ENCODE measurements at regions of chr19 and their contacts with region 1.

Region 1: GRCh38 chr19:46990991-46991676 is 28.5 kb upstream of the NPAS1 start:
- DNase-seq: peak; percentile 74 to 81
- ATAC-seq: peak; percentile 88
- H3K4me3 ChIP-seq: no peak overlapping the region
- H3K27ac ChIP-seq: peak overlapping the region; percentile 69 to 71 (median 70)
- H3K4me1 ChIP-seq: peaks cover 19 to 22% of the 10 kb centered on the region in 2 donors
- H3K27me3 ChIP-seq: no peaks in the 10 kb centered on the region
- CTCF ChIP-seq: peak; percentile 70 to 87 (median 84)
- POLR2A ChIP-seq: no peak

Region 2: GRCh38 chr19:45542234-45542668 is 1448.9 kb before region 1 on chr19:
- in situ Hi-C with region 1: no loop called
- intact Hi-C with region 1: no loop called
- DNase-seq: no peak
- ATAC-seq: no peak
- H3K4me3 ChIP-seq: no peak overlapping the region
- H3K27ac ChIP-seq: no peak overlapping the region
- H3K4me1 ChIP-seq: no peaks in the 10 kb centered on the region
- H3K27me3 ChIP-seq: no peaks in the 10 kb centered on the region
- CTCF ChIP-seq: no peak
- POLR2A ChIP-seq: no peak

Region 3: DNA sequence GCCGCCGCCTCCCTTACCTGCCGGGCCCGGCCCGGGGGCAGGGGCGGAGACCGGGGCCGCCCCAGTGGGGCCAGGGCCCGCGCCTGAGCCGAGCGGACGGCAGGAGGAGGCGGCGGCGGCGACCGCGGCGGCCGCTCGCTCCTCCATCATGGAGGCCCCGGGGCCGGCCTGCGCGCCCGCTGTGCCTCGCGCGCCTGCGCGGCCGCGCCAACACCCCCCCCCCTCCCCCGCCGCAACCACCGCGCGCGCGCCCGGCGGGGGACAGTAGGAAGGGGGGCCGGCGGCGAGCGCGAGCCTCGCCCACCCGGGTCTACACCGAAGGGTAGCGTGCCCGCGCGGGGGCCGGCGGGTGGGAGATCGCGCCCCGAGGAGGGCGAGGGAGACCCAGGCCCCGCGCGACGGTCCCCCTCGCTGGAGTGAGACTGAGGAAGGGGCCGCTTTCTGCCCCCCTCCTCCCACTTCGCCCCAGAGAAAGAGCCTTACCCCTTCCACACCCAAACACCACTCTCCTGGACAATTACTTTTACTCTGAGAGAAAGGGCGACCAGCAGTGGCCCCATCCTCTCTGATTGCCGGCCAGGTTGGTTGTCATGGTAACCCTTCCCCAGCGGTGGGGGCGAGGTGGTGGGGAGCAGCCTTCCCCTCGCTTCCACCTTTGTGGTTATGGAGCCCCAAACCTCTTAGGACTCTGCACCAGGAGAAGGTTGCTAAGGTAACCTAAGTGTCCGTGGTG is 244.7 kb before region 1 on chr19 and contains the start of gene STRN4:
- in situ Hi-C with region 1: loop called in 2 of 4 experiments (anchors 25 kb)
- intact Hi-C with region 1: loop called (anchors 5 kb)
- DNase-seq: no peak
- ATAC-seq: peak; percentile 74 to 78
- H3K4me3 ChIP-seq: peak within 1 kb of the TSS; percentile 87 to 100 (median 92)
- H3K27ac ChIP-seq: peak within 1 kb of the TSS; percentile 90 to 98 (median 96)
- H3K4me1 ChIP-seq: peaks cover 25 to 51% of the 10 kb centered on the region in 2 donors
- H3K27me3 ChIP-seq: no peaks in the 10 kb centered on the region
- CTCF ChIP-seq: no peak
- POLR2A ChIP-seq: peak; percentile 82 to 93
- total RNA-seq, gene STRN4: 45.5 to 75.7 (median 57.9) TPM

Region 4: DNA sequence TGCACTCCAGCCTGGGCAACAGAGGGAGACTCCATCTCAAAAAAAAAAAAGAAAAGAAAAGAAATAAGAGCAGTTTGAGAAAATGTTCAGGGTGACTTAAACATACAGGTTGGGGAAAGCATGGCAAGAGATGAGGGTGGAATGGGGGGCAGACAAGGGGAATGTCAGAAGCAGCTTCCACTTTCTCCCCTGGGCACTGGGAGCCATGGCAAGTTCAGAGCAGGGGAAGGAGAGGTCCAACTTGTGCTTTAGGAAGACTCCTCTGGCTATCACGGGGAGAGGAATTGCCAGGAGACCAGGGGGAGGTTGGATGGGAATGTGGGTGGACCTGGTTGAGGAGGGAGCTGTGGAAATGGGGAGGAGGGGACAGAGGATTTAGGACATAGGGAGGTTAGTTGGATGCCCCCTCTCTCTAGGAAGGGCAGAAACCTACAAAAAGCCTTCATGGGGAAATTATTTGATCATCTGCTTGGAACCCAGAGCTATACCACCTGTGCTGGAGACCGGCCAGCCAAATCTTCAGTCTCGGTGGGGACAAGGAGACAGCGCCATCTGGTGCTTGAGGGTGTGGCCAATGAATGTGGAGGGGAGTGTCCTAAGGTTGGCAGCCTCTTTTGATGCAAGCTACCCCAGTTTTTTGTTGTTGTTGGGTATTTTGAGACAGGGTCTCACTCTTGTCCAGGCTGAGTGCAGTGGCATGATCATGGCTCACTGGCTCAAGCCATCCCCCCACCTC is 237.5 kb before region 1 on chr19:
- in situ Hi-C with region 1: loop called in 2 of 4 experiments (anchors 25 kb)
- intact Hi-C with region 1: loop called (anchors 5 kb)
- DNase-seq: no peak
- ATAC-seq: no peak
- H3K4me3 ChIP-seq: no peak overlapping the region
- H3K27ac ChIP-seq: no peak overlapping the region
- H3K4me1 ChIP-seq: peaks cover 0 to 5% of the 10 kb centered on the region in 2 donors
- H3K27me3 ChIP-seq: no peaks in the 10 kb centered on the region
- CTCF ChIP-seq: peak in 3 of 5 experiments; percentile 30 to 50 (median 41)
- POLR2A ChIP-seq: no peak

Region 5: DNA sequence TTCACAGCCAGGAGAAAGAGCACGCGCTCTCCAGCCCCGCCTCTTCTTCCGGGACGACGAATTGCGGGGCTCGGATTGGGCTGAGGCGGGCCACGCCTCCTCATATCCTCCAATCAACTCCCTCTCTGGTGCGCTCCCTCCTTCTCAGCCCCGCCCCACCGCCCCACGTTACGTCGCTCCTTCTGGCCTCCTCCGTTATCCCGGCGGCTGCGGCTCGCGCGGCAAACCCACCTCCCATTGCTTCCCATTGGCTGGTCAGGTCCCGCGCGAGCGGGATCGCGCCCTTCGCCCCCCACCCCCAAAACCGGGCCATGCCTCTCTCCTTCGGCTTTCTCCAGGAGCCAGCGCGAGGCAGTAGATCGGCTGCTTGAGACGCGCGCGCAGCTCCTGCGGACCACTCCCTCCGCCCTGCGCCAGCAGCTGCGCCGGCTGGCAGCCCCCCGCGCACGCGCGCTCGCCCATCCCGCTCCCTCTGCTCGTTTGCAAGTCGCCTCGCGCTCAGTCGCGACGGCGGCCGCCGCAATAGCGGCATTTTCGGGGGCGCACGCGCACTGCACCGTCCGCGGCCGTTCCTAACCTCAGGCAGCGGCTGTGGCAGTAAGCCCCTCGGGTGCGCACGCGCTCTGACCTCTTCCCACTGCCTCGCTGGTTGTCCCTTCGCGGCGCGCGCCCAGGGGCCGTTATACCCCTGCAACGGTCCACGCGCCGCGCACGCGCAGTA is 130.8 kb before region 1 on chr19:
- in situ Hi-C with region 1: loop called (anchors 5 kb)
- intact Hi-C with region 1: loop called (anchors 1 kb)
- DNase-seq: peak; percentile 99
- ATAC-seq: peak; percentile 79 to 83
- H3K4me3 ChIP-seq: peak overlapping the region; percentile 71 to 98 (median 86)
- H3K27ac ChIP-seq: peak overlapping the region; percentile 94 to 100 (median 100)
- H3K4me1 ChIP-seq: peaks cover 51 to 53% of the 10 kb centered on the region in 2 donors
- H3K27me3 ChIP-seq: no peaks in the 10 kb centered on the region
- CTCF ChIP-seq: no peak
- POLR2A ChIP-seq: peak; percentile 83 to 84

Region 6: DNA sequence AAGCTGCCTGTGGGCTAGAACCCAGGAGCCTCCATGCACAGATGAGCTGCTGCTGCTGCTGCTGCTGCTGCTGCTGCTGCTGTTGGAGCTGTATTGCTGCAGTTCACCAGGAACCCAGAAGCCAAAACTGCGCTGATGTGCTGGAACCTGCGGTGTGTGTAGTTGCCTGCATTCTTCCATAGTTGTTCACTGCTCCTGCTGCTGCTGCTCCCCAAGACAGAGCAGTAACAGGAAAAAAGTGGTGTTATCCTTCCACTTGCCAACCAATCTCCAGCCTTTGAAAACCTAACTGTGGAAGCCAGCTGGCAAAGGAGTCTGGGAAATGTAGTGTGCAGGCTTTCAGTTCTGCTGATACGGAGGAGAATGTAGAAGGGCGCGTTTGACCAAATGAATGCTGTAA is 92.4 kb before region 1 on chr19:
- in situ Hi-C with region 1: no loop called
- intact Hi-C with region 1: no loop called
- DNase-seq: no peak
- ATAC-seq: peak in 1 of 2 donors; percentile 27
- H3K4me3 ChIP-seq: peak overlapping the region in 1 of 4 donors; percentile 28
- H3K27ac ChIP-seq: no peak overlapping the region
- H3K4me1 ChIP-seq: peaks cover 46 to 54% of the 10 kb centered on the region in 2 donors
- H3K27me3 ChIP-seq: no peaks in the 10 kb centered on the region
- CTCF ChIP-seq: no peak
- POLR2A ChIP-seq: no peak

Region 7: DNA sequence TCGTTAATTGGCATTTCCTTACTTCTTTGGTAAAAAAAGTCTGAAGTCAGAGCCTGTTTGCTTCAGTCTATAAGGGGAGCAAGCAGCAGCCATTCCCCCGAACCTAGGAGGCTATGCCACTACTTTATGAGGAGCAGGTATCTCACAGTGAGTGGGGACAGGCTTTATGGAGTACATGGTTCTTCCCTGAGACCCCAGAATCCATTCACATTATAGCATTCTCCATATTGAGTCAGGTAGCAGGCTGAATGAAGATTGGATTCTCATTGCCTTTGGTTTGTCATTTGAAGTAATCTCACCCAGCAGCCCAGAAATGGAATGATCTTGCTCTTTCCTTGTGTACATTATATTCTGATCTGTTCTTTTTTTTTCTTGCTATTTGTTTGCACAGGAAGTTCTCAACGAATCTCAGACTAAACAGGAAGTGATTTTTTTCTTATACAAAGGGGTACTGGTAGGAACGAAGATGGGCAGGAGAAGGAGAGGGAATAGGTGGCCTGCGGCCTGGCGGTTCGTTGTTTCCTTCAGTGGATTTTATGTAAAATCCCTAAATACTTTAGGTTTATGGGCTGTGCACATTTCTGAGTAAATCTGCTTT is 56.0 kb before region 1 on chr19:
- in situ Hi-C with region 1: no loop called
- intact Hi-C with region 1: no loop called
- DNase-seq: no peak
- ATAC-seq: no peak
- H3K4me3 ChIP-seq: no peak overlapping the region
- H3K27ac ChIP-seq: no peak overlapping the region
- H3K4me1 ChIP-seq: peaks cover 41% of the 10 kb centered on the region in 2 donors
- H3K27me3 ChIP-seq: no peaks in the 10 kb centered on the region
- CTCF ChIP-seq: no peak
- POLR2A ChIP-seq: no peak

Region 8: GRCh38 chr19:47019431-47020041 is 28.4 kb after region 1 on chr19 and contains the start of gene NPAS1:
- in situ Hi-C with region 1: no loop called
- intact Hi-C with region 1: no loop called
- DNase-seq: no peak
- ATAC-seq: no peak
- H3K4me3 ChIP-seq: peak within 1 kb of the TSS in 2 of 4 donors; percentile 7 to 33
- H3K27ac ChIP-seq: no peak within 1 kb of the TSS
- H3K4me1 ChIP-seq: peaks cover 9 to 18% of the 10 kb centered on the region in 2 donors
- H3K27me3 ChIP-seq: peaks cover 45 to 51% (median 51%) of the 10 kb centered on the region in 3 donors
- CTCF ChIP-seq: no peak
- POLR2A ChIP-seq: no peak
- total RNA-seq, gene NPAS1: 0.61 to 1.1 TPM in 2 of 4 donors, not detected in the others